Naive thymus-derived CD4-positive, alpha-beta T cell (primary cell): ENCODE measurements at regions of chr17 and their contacts with region 1.

Region 1: GRCh38 chr17:73814075-73814474 is 169.8 kb upstream of the SDK2 start:
- DNase-seq: no peak
- ATAC-seq: no peak
- H3K4me3 ChIP-seq: no peak overlapping the region
- H3K4me3 Mint-ChIP-seq: no peak overlapping the region
- H3K27ac ChIP-seq: no peak overlapping the region
- H3K27ac Mint-ChIP-seq: no peak overlapping the region
- H3K4me1 ChIP-seq: no peaks in the 10 kb centered on the region
- H3K4me1 Mint-ChIP-seq: peaks cover 0 to 5% (median 0%) of the 10 kb centered on the region in 7 donors
- H3K27me3 ChIP-seq: no peaks in the 10 kb centered on the region
- H3K27me3 Mint-ChIP-seq: no peaks in the 10 kb centered on the region

Region 2: GRCh38 chr17:73827627-73828291 is 13.7 kb after region 1 on chr17:
- CTCF ChIA-PET with region 1: no interaction called
- POLR2A ChIA-PET with region 1: interaction called, 10 read pairs
- intact Hi-C with region 1: no loop called
- DNase-seq: peak in 6 of 9 donors; percentile 41 to 66 (median 54)
- ATAC-seq: peak; percentile 67
- H3K4me3 ChIP-seq: no peak overlapping the region
- H3K4me3 Mint-ChIP-seq: peak overlapping the region; percentile 2 to 89 (median 74)
- H3K27ac ChIP-seq: peak overlapping the region; percentile 73
- H3K27ac Mint-ChIP-seq: peak overlapping the region; percentile 72 to 100 (median 91)
- H3K4me1 ChIP-seq: peaks cover 19 to 73% of the 10 kb centered on the region in 2 donors
- H3K4me1 Mint-ChIP-seq: peaks cover 6 to 98% (median 83%) of the 10 kb centered on the region in 7 donors
- H3K27me3 ChIP-seq: no peaks in the 10 kb centered on the region
- H3K27me3 Mint-ChIP-seq: peaks cover 0 to 9% (median 0%) of the 10 kb centered on the region in 5 donors

Region 3: DNA sequence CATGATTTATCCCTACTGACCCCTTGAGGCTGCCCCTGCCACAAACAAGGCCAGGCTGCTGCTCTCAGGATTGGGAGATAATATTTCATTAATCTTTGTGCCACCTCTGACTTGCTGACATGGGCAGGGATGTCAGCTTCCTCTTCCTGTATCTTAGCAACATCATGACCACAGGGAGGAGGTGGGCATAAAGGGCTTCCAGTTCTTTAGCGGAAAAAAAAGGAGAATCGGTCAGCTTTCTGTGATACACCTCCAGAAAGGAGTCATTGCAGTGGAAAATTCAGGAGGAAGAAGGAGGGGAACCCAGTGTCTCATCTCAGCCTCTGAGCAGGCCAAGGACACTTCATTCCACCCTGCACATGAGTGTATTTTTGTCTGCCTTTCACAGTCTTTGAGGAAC is 37.0 kb after region 1 on chr17:
- CTCF ChIA-PET with region 1: no interaction called
- POLR2A ChIA-PET with region 1: no interaction called
- intact Hi-C with region 1: no loop called
- DNase-seq: peak in 1 of 9 donors; percentile 11
- ATAC-seq: peak; percentile 32
- H3K4me3 ChIP-seq: no peak overlapping the region
- H3K4me3 Mint-ChIP-seq: no peak overlapping the region
- H3K27ac ChIP-seq: no peak overlapping the region
- H3K27ac Mint-ChIP-seq: peak overlapping the region in 1 of 9 donors; percentile 41
- H3K4me1 ChIP-seq: no peaks in the 10 kb centered on the region
- H3K4me1 Mint-ChIP-seq: peaks cover 0 to 13% (median 10%) of the 10 kb centered on the region in 7 donors
- H3K27me3 ChIP-seq: no peaks in the 10 kb centered on the region
- H3K27me3 Mint-ChIP-seq: no peaks in the 10 kb centered on the region